ENCODE measurements at regions of chr1 and their contacts with region 1.

Region 1: DNA sequence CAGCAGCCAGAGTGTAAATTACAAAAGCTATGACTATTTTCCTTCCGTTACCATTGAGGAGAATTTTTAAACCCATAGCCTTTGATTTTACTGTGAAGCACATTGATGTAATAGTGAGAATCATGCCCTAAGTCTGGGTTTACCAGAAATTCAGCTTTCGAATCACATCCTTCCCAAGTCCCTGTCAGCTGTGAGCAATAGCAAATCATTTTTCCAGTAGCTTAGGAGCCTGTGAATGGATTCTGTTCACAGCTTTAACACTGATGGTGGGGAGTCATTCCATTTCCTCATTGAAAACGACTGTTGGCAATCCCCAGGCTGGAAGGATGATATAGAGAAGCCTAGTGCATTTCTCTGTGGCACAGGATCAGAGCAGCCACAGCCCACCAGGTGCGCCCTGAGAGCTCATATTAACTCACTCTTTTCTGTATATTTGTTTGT is 82.2 kb upstream of the C1orf105 start:
- DNase-seq: peak; percentile 89
- H3K4me3 Mint-ChIP-seq: no peak overlapping the region
- H3K27ac Mint-ChIP-seq: peak overlapping the region; percentile 67
- H3K4me1 Mint-ChIP-seq: peaks cover 49% of the 10 kb centered on the region
- H3K27me3 Mint-ChIP-seq: no peaks in the 10 kb centered on the region

Region 2: DNA sequence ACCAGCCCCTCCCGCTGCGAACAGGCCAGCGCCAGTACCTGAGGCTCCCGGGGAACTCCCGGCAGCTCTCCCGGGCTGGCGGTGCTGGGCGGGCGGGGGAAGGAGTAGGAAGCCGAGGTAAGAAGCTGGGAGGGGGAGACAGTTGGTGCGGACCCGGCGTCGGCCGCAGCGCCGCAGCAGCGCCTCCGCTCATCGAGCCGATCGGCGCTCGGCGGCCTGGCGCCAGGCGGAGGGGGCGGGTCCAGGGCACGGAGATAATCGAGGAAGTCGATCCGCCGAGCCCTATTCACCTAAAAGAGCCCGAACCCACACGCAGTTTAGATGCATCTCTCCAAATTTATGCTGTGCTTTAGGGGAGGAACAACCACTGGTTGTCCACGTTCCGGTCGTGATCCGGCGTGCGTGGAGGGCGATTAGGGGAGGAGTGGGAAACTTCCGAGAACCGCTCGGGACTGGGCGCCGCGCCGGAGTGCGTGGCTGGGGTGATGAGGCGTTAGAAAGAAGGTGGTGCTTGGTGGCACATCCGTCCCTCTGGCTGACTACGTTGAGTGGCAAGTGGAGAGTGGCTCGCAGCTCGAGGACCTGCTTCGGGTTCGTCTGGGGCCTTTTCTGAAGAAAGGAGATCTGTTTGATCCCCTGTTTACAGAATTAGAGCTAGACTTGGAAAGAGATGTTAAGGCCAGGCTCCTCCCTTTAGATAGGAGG is 596.3 kb before region 1 on chr1 and contains the start of gene VAMP4:
- CTCF ChIA-PET with region 1: no interaction called
- intact Hi-C with region 1: loop called (anchors 1 kb)
- DNase-seq: peak; percentile 90
- H3K4me3 Mint-ChIP-seq: peak within 1 kb of the TSS; percentile 96
- H3K27ac Mint-ChIP-seq: peak within 1 kb of the TSS; percentile 99
- H3K4me1 Mint-ChIP-seq: peaks cover 40% of the 10 kb centered on the region
- H3K27me3 Mint-ChIP-seq: no peaks in the 10 kb centered on the region
- total RNA-seq, gene VAMP4: 10.5 to 10.9 TPM

Region 3: DNA sequence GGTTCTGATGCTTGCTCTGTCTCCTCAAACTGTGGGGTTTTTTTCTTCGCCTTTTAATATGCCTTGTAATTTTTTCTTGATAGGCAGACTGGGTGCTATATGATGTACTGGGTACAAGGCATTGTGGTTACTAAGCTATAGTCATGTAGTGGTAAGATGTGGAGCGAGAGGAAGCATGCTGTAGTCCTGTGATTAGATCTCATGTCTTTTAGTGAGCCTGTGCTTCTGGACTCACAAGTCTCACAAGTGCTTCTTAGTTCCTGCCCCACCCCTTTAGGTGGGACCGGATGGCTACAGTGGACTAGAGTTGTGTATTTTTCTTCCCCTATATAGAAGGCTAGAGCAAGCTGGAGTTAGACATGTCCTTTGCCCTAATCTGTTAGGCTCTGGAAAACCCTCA is 318.3 kb before region 1 on chr1:
- CTCF ChIA-PET with region 1: no interaction called
- intact Hi-C with region 1: no loop called
- DNase-seq: no peak
- H3K4me3 Mint-ChIP-seq: no peak overlapping the region
- H3K27ac Mint-ChIP-seq: no peak overlapping the region
- H3K4me1 Mint-ChIP-seq: no peaks in the 10 kb centered on the region
- H3K27me3 Mint-ChIP-seq: no peaks in the 10 kb centered on the region

Region 4: DNA sequence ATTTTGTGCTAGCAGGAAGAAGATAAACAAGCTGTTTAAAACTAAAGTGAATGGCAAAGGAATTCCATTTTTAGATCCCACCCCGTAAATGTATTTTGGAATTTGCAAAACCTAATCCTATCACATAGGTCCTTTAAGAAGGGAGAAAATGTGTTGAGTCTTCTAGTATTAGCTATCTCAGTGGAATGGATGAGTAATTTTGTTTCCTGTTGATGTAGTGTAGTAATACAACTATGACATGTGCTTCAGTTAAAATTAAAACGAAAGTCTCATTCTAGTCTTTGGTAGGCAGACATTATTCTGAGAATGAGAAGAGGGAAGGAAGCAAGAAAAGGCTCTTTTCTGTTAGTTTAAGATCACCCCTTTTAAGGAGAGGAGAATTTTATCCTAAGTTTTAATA is 183.8 kb before region 1 on chr1:
- CTCF ChIA-PET with region 1: no interaction called
- intact Hi-C with region 1: loop called (anchors 1 kb)
- DNase-seq: no peak
- H3K4me3 Mint-ChIP-seq: no peak overlapping the region
- H3K27ac Mint-ChIP-seq: peak overlapping the region; percentile 82
- H3K4me1 Mint-ChIP-seq: peaks cover 9% of the 10 kb centered on the region
- H3K27me3 Mint-ChIP-seq: no peaks in the 10 kb centered on the region

Region 5: GRCh38 chr1:172239901-172240300 is 98.4 kb before region 1 on chr1:
- CTCF ChIA-PET with region 1: no interaction called
- intact Hi-C with region 1: no loop called
- DNase-seq: no peak
- H3K4me3 Mint-ChIP-seq: no peak overlapping the region
- H3K27ac Mint-ChIP-seq: no peak overlapping the region
- H3K4me1 Mint-ChIP-seq: no peaks in the 10 kb centered on the region
- H3K27me3 Mint-ChIP-seq: no peaks in the 10 kb centered on the region

Region 6: GRCh38 chr1:172323686-172324085 is 14.6 kb before region 1 on chr1:
- CTCF ChIA-PET with region 1: no interaction called
- intact Hi-C with region 1: no loop called
- DNase-seq: no peak
- H3K4me3 Mint-ChIP-seq: no peak overlapping the region
- H3K27ac Mint-ChIP-seq: no peak overlapping the region
- H3K4me1 Mint-ChIP-seq: no peaks in the 10 kb centered on the region
- H3K27me3 Mint-ChIP-seq: no peaks in the 10 kb centered on the region

Region 7: GRCh38 chr1:172357753-172358385 is 19.6 kb after region 1 on chr1:
- CTCF ChIA-PET with region 1: interaction called, 25 read pairs
- intact Hi-C with region 1: loop called (anchors 1 kb)
- DNase-seq: no peak
- H3K4me3 Mint-ChIP-seq: no peak overlapping the region
- H3K27ac Mint-ChIP-seq: peak overlapping the region; percentile 55
- H3K4me1 Mint-ChIP-seq: peaks cover 64% of the 10 kb centered on the region
- H3K27me3 Mint-ChIP-seq: no peaks in the 10 kb centered on the region

Region 8: GRCh38 chr1:172411791-172412338 is 73.5 kb after region 1 on chr1:
- CTCF ChIA-PET with region 1: no interaction called
- intact Hi-C with region 1: loop called (anchors 1 kb)
- DNase-seq: no peak
- H3K4me3 Mint-ChIP-seq: no peak overlapping the region
- H3K27ac Mint-ChIP-seq: no peak overlapping the region
- H3K4me1 Mint-ChIP-seq: peaks cover 11% of the 10 kb centered on the region
- H3K27me3 Mint-ChIP-seq: no peaks in the 10 kb centered on the region

Region 9: DNA sequence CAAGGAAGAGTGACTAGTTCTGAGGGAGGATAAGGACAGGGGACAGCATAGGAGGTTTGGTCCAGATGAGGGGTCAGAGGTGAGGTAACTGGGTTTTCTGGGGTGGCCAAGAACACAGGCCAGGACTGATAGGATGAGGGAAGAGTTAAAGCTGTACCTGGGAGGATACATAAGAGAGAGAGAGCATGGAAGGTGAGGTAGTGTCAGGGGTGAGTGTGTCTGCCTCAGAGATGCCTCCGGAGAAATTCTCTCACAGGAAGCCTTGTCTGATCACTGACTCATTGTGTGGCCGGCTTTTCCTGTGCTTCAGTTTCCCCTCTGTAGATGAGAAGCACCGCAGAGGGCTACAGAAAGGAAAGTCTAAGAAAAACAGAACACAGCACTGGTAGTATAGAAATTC is 360.8 kb after region 1 on chr1:
- CTCF ChIA-PET with region 1: no interaction called
- intact Hi-C with region 1: loop called (anchors 5 kb)
- DNase-seq: peak; percentile 88
- H3K4me3 Mint-ChIP-seq: peak overlapping the region; percentile 36
- H3K27ac Mint-ChIP-seq: peak overlapping the region; percentile 89
- H3K4me1 Mint-ChIP-seq: peaks cover 53% of the 10 kb centered on the region
- H3K27me3 Mint-ChIP-seq: no peaks in the 10 kb centered on the region

Region 10: GRCh38 chr1:173330149-173330951 is 992.0 kb after region 1 on chr1:
- CTCF ChIA-PET with region 1: no interaction called
- intact Hi-C with region 1: loop called (anchors 1 kb)
- DNase-seq: no peak
- H3K4me3 Mint-ChIP-seq: no peak overlapping the region
- H3K27ac Mint-ChIP-seq: no peak overlapping the region
- H3K4me1 Mint-ChIP-seq: peaks cover 25% of the 10 kb centered on the region
- H3K27me3 Mint-ChIP-seq: no peaks in the 10 kb centered on the region

Measured in activated naive CD4-positive, alpha-beta T cell treated with anti-CD3 and anti-CD28 coated beads for 36 hours (primary cell).